ENCODE measurements at regions of chr19 and their contacts with region 1.

Region 1: DNA sequence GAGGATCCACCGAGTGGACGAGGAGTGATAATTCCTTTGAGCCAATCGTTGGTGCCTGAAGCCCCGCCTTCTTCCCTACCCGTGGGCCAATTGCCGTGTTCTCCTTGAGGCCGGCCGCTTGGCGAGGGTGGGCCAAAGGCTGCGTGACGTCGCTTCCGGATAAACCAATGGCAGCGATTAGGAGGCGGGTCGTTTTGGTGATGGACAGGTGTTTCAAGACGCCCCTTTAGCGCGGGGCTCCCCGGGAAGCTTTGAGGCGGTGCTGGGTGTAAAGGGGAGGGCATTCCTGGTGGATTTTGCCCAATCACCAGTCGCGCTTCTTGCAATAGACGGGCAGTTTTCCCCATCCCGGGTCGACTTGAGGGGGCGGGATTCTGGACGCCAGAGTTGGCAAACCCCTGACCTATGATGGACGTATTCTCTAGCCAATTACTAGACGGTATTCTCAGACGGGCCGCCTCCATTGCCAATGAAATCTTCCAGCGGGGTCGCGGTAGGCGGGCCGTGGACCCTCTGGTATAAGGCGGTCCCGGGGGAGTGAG is 310 bp upstream of the PRMT1 start:
- DNase-seq: peak; percentile 100
- H3K4me3 Mint-ChIP-seq: peak overlapping the region; percentile 98
- H3K27ac Mint-ChIP-seq: peak overlapping the region; percentile 96
- H3K4me1 Mint-ChIP-seq: peaks cover 42% of the 10 kb centered on the region
- H3K27me3 Mint-ChIP-seq: no peaks in the 10 kb centered on the region

Region 2: GRCh38 chr19:49497047-49497788 is 179.5 kb before region 1 on chr19:
- CTCF ChIA-PET with region 1: interaction called, 6 read pairs
- POLR2A ChIA-PET with region 1: interaction called, 12 read pairs
- intact Hi-C with region 1: loop called (anchors 2 kb)
- DNase-seq: peak; percentile 83
- H3K4me3 Mint-ChIP-seq: peak overlapping the region; percentile 92
- H3K27ac Mint-ChIP-seq: peak overlapping the region; percentile 97
- H3K4me1 Mint-ChIP-seq: peaks cover 49% of the 10 kb centered on the region
- H3K27me3 Mint-ChIP-seq: no peaks in the 10 kb centered on the region

Region 3: DNA sequence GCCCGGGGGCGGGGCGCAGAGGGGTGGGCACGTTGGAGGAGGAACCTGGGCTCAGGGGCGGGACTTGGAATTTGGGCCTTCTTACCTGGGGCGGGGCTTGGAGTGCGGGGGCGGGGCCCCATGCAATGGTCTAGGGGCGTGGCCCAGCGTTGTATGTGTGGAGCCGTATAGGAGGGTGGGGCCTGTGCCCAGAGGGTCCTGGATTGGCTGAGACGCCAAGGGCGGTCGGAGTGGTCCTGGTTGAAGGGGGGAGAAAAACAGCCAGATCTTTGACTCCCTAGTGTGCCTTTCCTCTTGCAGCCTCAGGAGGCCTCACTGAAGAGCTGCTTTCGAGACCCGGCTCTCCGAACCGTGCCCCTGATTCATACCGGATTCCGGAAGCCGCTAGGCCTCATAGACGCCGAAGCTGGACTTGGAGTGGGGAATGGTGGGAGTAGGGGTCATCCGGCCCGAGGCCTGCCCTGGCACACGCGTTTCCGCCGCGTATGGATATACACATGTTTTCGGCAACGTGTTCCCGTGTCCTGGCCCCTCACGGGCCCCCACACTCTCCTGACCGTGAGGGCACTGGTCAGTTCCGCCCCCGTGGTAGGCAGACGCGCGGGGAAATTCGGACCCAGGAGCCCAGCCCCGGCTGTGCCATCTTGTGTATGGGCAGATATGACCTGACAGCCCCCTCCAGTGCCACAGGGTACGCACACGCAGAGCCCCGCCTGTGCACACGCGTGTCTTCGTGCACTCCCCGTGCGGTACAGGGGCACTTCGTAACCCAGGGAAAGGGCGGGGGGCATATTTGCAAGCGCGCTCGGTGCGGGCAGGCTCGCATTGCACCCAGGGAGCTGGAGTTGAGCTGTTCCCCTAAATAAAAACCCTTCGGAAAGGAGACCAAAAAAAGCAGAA is 86.4 kb before region 1 on chr19:
- CTCF ChIA-PET with region 1: interaction called, 6 read pairs
- POLR2A ChIA-PET with region 1: interaction called, 8 read pairs
- intact Hi-C with region 1: loop called (anchors 1 kb)
- DNase-seq: peak; percentile 97
- H3K4me3 Mint-ChIP-seq: peak overlapping the region; percentile 80
- H3K27ac Mint-ChIP-seq: peak overlapping the region; percentile 91
- H3K4me1 Mint-ChIP-seq: peaks cover 32% of the 10 kb centered on the region
- H3K27me3 Mint-ChIP-seq: no peaks in the 10 kb centered on the region

Region 4: DNA sequence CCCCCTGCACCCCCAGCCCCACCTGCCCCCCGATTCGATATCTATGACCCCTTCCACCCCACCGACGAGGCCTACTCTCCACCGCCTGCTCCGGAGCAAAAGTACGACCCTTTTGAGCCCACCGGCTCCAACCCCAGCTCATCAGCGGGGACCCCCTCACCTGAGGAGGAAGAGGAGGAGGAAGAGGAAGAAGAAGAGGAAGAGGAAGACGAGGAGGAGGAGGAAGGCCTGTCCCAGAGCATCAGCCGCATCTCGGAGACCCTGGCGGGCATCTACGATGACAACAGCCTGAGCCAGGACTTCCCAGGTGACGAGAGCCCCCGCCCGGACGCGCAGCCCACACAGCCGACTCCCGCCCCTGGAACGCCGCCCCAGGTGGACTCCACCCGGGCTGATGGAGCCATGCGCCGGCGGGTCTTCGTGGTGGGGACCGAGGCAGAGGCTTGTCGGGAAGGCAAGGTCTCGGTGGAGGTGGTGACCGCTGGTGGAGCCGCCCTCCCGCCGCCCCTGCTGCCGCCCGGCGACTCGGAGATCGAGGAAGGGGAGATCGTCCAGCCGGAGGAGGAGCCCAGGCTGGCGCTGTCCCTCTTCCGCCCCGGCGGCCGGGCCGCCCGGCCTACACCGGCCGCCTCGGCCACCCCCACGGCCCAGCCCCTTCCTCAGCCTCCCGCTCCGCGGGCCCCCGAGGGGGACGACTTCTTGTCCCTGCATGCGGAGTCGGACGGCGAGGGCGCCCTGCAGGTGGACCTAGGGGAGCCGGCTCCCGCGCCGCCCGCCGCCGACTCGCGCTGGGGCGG is 25.5 kb before region 1 on chr19:
- CTCF ChIA-PET with region 1: interaction called, 13 read pairs
- POLR2A ChIA-PET with region 1: interaction called, 3 read pairs
- intact Hi-C with region 1: loop called (anchors 1 kb)
- DNase-seq: no peak
- H3K4me3 Mint-ChIP-seq: no peak overlapping the region
- H3K27ac Mint-ChIP-seq: no peak overlapping the region
- H3K4me1 Mint-ChIP-seq: peaks cover 2% of the 10 kb centered on the region
- H3K27me3 Mint-ChIP-seq: no peaks in the 10 kb centered on the region

Region 5: DNA sequence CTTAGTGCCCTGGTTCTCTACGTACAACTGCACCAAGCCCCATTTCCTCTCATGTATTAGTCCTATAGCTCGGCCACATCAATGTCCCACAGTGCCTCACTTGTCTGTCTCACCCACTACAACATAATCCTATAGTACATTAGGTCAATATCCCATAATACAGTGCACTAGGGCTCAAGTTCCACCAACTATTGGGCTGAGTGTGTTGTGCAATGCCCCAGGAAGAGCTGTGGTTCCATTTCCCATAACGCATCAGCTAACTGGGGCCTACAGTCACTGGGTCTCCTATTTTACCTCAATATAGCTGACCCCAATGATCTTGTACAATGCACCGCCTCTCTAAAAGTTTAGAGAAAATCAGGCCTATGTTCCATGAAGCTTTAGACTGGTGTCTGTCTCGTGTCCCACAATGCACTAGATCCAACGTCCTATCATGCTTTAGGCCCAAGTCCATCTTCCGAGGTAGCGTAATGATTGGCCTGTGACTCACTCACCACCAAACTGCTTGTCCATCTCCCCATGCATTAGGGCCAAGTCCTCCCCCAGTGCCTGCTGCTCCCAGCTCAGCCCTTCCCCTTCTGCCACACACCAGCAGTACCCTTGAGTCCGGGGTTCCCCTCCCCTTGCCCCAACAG is 64.6 kb after region 1 on chr19:
- CTCF ChIA-PET with region 1: no interaction called
- POLR2A ChIA-PET with region 1: no interaction called
- intact Hi-C with region 1: no loop called
- DNase-seq: no peak
- H3K4me3 Mint-ChIP-seq: no peak overlapping the region
- H3K27ac Mint-ChIP-seq: no peak overlapping the region
- H3K4me1 Mint-ChIP-seq: no peaks in the 10 kb centered on the region
- H3K27me3 Mint-ChIP-seq: no peaks in the 10 kb centered on the region

Region 6: DNA sequence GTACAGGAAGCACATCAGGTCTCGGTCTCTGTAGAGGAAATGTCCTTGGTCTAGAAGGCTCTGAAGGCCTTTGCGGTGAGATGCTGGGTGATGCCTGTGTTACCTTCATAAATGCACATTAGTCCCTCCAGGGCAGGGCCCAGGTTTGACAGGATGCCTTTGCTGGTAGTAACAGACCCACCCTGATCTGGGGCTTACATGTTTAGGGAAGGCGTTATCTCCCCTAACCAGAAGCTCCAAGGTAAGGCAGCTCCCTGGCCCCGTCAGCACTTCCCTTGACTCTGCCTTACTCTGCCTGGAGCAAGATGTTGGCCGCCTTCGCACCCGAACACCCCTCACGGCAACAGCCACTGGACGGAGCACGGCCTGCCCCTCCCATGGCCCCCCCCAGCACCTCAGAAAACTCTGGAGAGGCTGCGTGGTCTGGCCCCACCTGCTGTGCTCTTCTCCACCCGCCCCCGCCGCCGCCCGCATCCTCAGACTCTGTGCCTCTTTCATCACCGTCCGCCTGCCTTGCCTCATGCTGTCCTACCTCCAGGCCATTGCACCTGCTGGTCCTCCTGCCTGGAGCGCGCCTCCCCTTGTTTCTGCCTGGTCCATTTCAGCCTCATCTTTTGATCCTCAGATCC is 99.1 kb after region 1 on chr19:
- CTCF ChIA-PET with region 1: no interaction called
- POLR2A ChIA-PET with region 1: no interaction called
- intact Hi-C with region 1: no loop called
- DNase-seq: no peak
- H3K4me3 Mint-ChIP-seq: no peak overlapping the region
- H3K27ac Mint-ChIP-seq: no peak overlapping the region
- H3K4me1 Mint-ChIP-seq: peaks cover 8% of the 10 kb centered on the region
- H3K27me3 Mint-ChIP-seq: no peaks in the 10 kb centered on the region

Region 7: GRCh38 chr19:49808711-49809159 is 132.0 kb after region 1 on chr19:
- CTCF ChIA-PET with region 1: no interaction called
- POLR2A ChIA-PET with region 1: interaction called, 3 read pairs
- intact Hi-C with region 1: loop called (anchors 2 kb)
- DNase-seq: peak; percentile 94
- H3K4me3 Mint-ChIP-seq: peak overlapping the region; percentile 81
- H3K27ac Mint-ChIP-seq: peak overlapping the region; percentile 72
- H3K4me1 Mint-ChIP-seq: peaks cover 32% of the 10 kb centered on the region
- H3K27me3 Mint-ChIP-seq: no peaks in the 10 kb centered on the region

Region 8: DNA sequence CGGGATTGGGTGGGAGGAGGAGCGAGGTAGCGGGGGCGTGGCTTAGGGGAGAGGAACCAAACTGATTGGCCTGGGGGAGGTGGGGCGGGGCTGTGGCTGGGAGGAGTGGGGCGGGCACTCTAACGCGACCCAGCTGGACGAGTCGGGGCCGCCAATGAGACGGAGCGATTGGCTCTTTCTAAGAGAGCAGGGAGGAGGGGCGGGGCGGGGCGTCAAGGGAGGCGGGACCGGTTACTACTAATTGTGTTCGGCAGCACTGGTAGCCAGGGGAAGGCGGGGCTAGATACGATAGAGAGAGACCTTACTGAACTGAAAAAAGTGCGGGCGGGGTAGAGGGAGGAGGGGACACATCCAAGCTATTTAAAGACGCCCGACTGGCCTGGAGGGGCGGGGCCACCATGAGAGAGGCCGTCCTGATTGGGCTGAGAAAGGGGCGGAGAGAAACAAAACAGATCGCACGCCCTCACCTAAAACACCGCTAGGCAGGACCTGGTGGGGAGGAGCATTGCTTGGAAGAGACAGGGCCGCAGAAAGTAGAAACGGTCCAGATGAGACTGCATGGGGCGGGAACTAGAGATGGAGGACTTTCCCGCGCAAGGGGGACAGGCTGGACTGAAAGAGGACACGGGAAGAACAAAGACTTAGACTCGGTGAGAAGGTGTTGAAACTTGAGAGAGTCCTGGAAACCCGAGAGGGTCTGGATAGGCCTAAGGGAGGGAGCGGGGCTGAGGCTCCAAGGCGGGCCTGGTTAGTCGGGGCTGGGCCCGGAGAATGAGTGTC is 652.6 kb after region 1 on chr19 and contains the start of gene KCNC3:
- CTCF ChIA-PET with region 1: no interaction called
- POLR2A ChIA-PET with region 1: no interaction called
- intact Hi-C with region 1: loop called (anchors 5 kb)
- DNase-seq: peak; percentile 100
- H3K4me3 Mint-ChIP-seq: peak within 1 kb of the TSS; percentile 82
- H3K27ac Mint-ChIP-seq: peak within 1 kb of the TSS; percentile 88
- H3K4me1 Mint-ChIP-seq: peaks cover 67% of the 10 kb centered on the region
- H3K27me3 Mint-ChIP-seq: peaks cover 49% of the 10 kb centered on the region
- total RNA-seq, gene KCNC3: 5.4 to 6.2 TPM